ENCODE measurements at regions of chr18 and their contacts with region 1.

Region 1: GRCh38 chr18:44819944-44820510 is 139.3 kb downstream of the SETBP1 start:
- DNase-seq: no peak
- ATAC-seq: no peak
- H3K4me3 ChIP-seq: no peak overlapping the region
- H3K4me3 Mint-ChIP-seq: no peak overlapping the region
- H3K27ac ChIP-seq: no peak overlapping the region
- H3K27ac Mint-ChIP-seq: no peak overlapping the region
- H3K4me1 ChIP-seq: peaks cover 55 to 57% of the 10 kb centered on the region in 2 donors
- H3K4me1 Mint-ChIP-seq: peaks cover 75% of the 10 kb centered on the region
- H3K27me3 ChIP-seq: no peaks in the 10 kb centered on the region
- H3K27me3 Mint-ChIP-seq: no peaks in the 10 kb centered on the region
- CTCF ChIP-seq: no peak

Region 2: GRCh38 chr18:44805643-44806042 is 14.4 kb before region 1 on chr18:
- CTCF ChIA-PET with region 1: no interaction called
- POLR2A ChIA-PET with region 1: interaction called, 3 read pairs
- intact Hi-C with region 1: loop called (anchors 2 kb)
- DNase-seq: no peak
- ATAC-seq: peak; percentile 28
- H3K4me3 ChIP-seq: no peak overlapping the region
- H3K4me3 Mint-ChIP-seq: no peak overlapping the region
- H3K27ac ChIP-seq: no peak overlapping the region
- H3K27ac Mint-ChIP-seq: peak overlapping the region; percentile 68
- H3K4me1 ChIP-seq: peaks cover 20 to 23% of the 10 kb centered on the region in 2 donors
- H3K4me1 Mint-ChIP-seq: peaks cover 81% of the 10 kb centered on the region
- H3K27me3 ChIP-seq: no peaks in the 10 kb centered on the region
- H3K27me3 Mint-ChIP-seq: no peaks in the 10 kb centered on the region
- CTCF ChIP-seq: no peak